Colonic mucosa (tissue), 4 donors: ENCODE measurements at regions of chr11 and their contacts with region 1.

Region 1: GRCh38 chr11:95849087-95849825 is 59.0 kb downstream of the CEP57 start:
- DNase-seq: peak; percentile 49
- H3K4me3 ChIP-seq: no peak overlapping the region
- H3K27ac ChIP-seq: no peak overlapping the region
- H3K4me1 ChIP-seq: no peaks in the 10 kb centered on the region
- H3K27me3 ChIP-seq: no peaks in the 10 kb centered on the region
- CTCF ChIP-seq: peak; percentile 33

Region 2: DNA sequence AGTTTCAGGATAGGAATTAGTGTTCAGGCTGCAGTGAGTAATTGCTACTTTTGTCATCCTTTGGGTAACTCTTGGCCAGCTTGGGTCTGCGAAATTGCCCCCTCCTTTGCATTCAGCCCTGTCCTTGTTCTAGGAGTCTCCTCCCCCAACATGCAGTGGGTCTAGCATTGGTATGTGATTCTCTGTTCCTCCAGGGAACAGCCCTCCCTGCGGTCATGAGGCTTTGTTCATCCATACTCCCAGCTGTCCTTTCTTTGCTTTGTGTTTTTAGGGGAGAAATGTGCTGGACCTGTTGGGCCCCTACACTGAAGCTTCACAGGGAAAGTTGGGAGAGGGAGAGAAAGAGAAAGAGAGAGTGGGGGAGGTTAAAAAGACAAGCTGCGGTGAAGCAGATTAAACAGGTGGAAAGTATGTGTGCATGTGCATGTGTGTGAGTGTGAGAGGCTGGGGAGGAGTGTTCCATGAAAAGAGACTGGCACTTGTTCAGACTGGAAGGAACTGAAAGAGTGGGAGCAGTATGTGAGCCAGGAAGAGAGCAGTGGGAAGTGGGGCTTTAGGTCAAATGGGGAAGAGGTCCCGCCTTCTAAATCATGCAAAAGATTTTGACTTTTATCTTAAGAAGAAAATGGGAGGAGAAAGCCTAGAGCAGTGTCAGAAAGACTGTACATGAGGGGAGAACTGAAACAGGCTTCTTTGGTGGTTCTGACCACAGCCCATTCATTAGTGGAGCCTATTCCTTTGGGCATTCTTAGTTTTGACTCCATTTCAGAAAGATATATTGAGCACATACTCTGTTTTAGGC is 600.4 kb before region 1 on chr11:
- intact Hi-C with region 1: no loop called
- DNase-seq: no peak
- H3K4me3 ChIP-seq: no peak overlapping the region
- H3K27ac ChIP-seq: no peak overlapping the region
- H3K4me1 ChIP-seq: no peaks in the 10 kb centered on the region
- H3K27me3 ChIP-seq: no peaks in the 10 kb centered on the region
- CTCF ChIP-seq: no peak

Region 3: GRCh38 chr11:96357794-96358193 is 508.5 kb after region 1 on chr11:
- intact Hi-C with region 1: loop called (anchors 10 kb)
- DNase-seq: no peak
- H3K4me3 ChIP-seq: no peak overlapping the region
- H3K27ac ChIP-seq: no peak overlapping the region
- H3K4me1 ChIP-seq: no peaks in the 10 kb centered on the region
- H3K27me3 ChIP-seq: no peaks in the 10 kb centered on the region
- CTCF ChIP-seq: no peak

Region 4: GRCh38 chr11:96389720-96390487 is 540.6 kb after region 1 on chr11 and contains the starts of genes CCDC82 and JRKL:
- intact Hi-C with region 1: loop called (anchors 10 kb)
- DNase-seq: peak; percentile 99
- H3K4me3 ChIP-seq: peak within 1 kb of the TSS; percentile 85
- H3K27ac ChIP-seq: peak within 1 kb of the TSS; percentile 86
- H3K4me1 ChIP-seq: no peaks in the 10 kb centered on the region
- H3K27me3 ChIP-seq: no peaks in the 10 kb centered on the region
- CTCF ChIP-seq: no peak
- total RNA-seq, gene CCDC82: 11.6 to 20.4 TPM
- total RNA-seq, gene JRKL: 8.0 to 10.9 TPM